Activated naive CD4-positive, alpha-beta T cell treated with anti-CD3 and anti-CD28 coated beads for 36 hours (primary cell): ENCODE measurements at regions of chr2 and their contacts with region 1.

Region 1: GRCh38 chr2:96485751-96486651 is 19.2 kb downstream of the NEURL3 start:
- DNase-seq: peak; percentile 94
- H3K4me3 Mint-ChIP-seq: peak overlapping the region; percentile 97
- H3K27ac Mint-ChIP-seq: peak overlapping the region; percentile 99
- H3K4me1 Mint-ChIP-seq: peaks cover 49% of the 10 kb centered on the region
- H3K27me3 Mint-ChIP-seq: no peaks in the 10 kb centered on the region

Region 2: GRCh38 chr2:96208143-96209010 is 277.6 kb before region 1 on chr2 and contains the start of gene STARD7:
- CTCF ChIA-PET with region 1: no interaction called
- intact Hi-C with region 1: loop called (anchors 1 kb)
- DNase-seq: peak; percentile 98
- H3K4me3 Mint-ChIP-seq: peak within 1 kb of the TSS; percentile 92
- H3K27ac Mint-ChIP-seq: peak within 1 kb of the TSS; percentile 88
- H3K4me1 Mint-ChIP-seq: peaks cover 48% of the 10 kb centered on the region
- H3K27me3 Mint-ChIP-seq: no peaks in the 10 kb centered on the region
- total RNA-seq, gene STARD7: 84.7 to 87.6 TPM

Region 3: DNA sequence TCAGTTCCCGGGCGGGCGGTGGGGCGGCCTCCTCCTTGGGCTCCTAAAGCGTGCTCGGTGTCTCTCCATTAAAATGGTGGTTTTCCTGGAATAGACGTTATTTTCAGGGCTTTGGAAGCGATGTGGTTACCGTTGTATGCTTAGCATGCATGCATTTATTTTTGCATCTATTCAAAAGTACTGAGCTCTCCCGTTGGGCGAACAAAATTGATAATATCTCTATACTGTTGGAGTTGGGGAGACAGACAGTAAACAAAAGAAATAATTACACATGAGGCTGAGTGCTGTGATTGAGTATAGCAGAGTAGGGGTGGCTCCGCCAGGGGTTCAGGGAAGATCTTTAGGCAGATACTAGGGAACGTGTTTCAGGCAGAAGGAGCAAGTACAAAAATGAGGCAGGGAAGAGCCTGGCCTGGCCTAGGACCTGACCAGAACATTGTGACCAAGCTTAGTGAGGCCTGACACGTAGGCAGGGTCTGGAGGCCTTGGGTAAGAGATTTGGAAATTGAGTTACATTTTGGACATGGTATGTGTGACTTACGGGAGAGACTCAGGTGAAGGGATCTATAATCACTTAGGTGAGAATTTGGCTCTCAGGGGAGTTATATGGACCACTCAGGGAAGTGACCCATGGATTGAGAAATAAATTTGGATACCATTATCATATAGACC is 149.8 kb before region 1 on chr2:
- CTCF ChIA-PET with region 1: no interaction called
- intact Hi-C with region 1: loop called (anchors 5 kb)
- DNase-seq: no peak
- H3K4me3 Mint-ChIP-seq: peak overlapping the region; percentile 87
- H3K27ac Mint-ChIP-seq: peak overlapping the region; percentile 72
- H3K4me1 Mint-ChIP-seq: peaks cover 51% of the 10 kb centered on the region
- H3K27me3 Mint-ChIP-seq: no peaks in the 10 kb centered on the region

Region 4: GRCh38 chr2:96427917-96428316 is 58.1 kb before region 1 on chr2:
- CTCF ChIA-PET with region 1: interaction called, 3 read pairs
- intact Hi-C with region 1: loop called (anchors 2 kb)
- DNase-seq: peak; percentile 61
- H3K4me3 Mint-ChIP-seq: no peak overlapping the region
- H3K27ac Mint-ChIP-seq: no peak overlapping the region
- H3K4me1 Mint-ChIP-seq: peaks cover 9% of the 10 kb centered on the region
- H3K27me3 Mint-ChIP-seq: peaks cover 8% of the 10 kb centered on the region

Region 5: GRCh38 chr2:96495982-96496629 is 10.1 kb after region 1 on chr2:
- CTCF ChIA-PET with region 1: interaction called, 3 read pairs
- intact Hi-C with region 1: loop called (anchors 1 kb)
- DNase-seq: no peak
- H3K4me3 Mint-ChIP-seq: no peak overlapping the region
- H3K27ac Mint-ChIP-seq: peak overlapping the region; percentile 46
- H3K4me1 Mint-ChIP-seq: peaks cover 34% of the 10 kb centered on the region
- H3K27me3 Mint-ChIP-seq: no peaks in the 10 kb centered on the region

Region 6: GRCh38 chr2:96527286-96528005 is 41.4 kb after region 1 on chr2:
- CTCF ChIA-PET with region 1: interaction called, 8 read pairs
- intact Hi-C with region 1: loop called (anchors 1 kb)
- DNase-seq: peak; percentile 87
- H3K4me3 Mint-ChIP-seq: peak overlapping the region; percentile 78
- H3K27ac Mint-ChIP-seq: peak overlapping the region; percentile 99
- H3K4me1 Mint-ChIP-seq: peaks cover 61% of the 10 kb centered on the region
- H3K27me3 Mint-ChIP-seq: no peaks in the 10 kb centered on the region